ENCODE measurements at regions of chr1 and their contacts with region 1.

Region 1: DNA sequence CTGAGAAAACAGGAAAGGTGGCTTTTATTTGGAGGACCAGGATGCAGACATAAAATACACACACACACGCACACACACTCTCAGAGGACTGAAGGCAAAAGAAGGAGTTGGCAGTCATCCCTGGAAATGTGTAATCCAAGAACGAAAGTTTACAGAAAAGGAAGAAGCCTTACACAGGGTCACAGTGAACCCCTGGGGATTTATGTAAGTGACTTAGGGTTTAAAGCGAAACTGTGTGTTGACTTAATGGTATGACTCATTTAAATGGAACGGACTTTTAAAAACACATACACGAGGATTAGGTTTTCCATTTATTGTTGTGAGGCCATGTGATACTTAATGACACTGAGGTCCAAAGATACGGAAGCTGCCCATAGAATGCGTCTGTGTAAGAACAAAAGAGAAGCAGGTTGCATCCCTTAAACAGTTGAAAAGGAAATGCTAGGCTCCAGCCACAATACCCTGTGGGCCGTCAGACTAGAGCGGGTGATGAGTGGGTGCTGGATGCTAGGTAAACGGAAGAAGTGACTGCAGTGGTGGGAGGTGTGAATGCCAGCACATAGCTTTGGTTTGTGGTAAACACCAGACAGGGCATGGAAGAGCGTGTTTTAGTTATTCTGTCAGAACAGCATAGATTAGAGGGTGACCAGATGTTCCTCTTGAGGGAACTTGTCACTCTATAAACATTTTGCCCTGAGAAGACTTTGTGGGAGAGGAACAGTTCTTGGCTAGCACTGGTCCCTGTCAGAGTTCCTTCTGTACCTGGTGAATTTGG is 21.6 kb upstream of the BCL10 start:
- DNase-seq: peak; percentile 91
- H3K4me3 Mint-ChIP-seq: peak overlapping the region; percentile 42
- H3K27ac Mint-ChIP-seq: peak overlapping the region; percentile 71
- H3K4me1 Mint-ChIP-seq: peaks cover 27% of the 10 kb centered on the region
- H3K27me3 Mint-ChIP-seq: peaks cover 38% of the 10 kb centered on the region

Region 2: GRCh38 chr1:84862810-84863251 is 435.2 kb before region 1 on chr1:
- CTCF ChIA-PET with region 1: no interaction called
- POLR2A ChIA-PET with region 1: no interaction called
- intact Hi-C with region 1: loop called (anchors 5 kb)
- DNase-seq: peak; percentile 65
- H3K4me3 Mint-ChIP-seq: peak overlapping the region; percentile 7
- H3K27ac Mint-ChIP-seq: peak overlapping the region; percentile 43
- H3K4me1 Mint-ChIP-seq: peaks cover 28% of the 10 kb centered on the region
- H3K27me3 Mint-ChIP-seq: no peaks in the 10 kb centered on the region

Region 3: GRCh38 chr1:85321237-85321964 is 23.4 kb after region 1 on chr1:
- CTCF ChIA-PET with region 1: interaction called, 7 read pairs
- POLR2A ChIA-PET with region 1: interaction called, 5 read pairs
- intact Hi-C with region 1: loop called (anchors 1 kb)
- DNase-seq: peak; percentile 72
- H3K4me3 Mint-ChIP-seq: no peak overlapping the region
- H3K27ac Mint-ChIP-seq: no peak overlapping the region
- H3K4me1 Mint-ChIP-seq: peaks cover 9% of the 10 kb centered on the region
- H3K27me3 Mint-ChIP-seq: peaks cover 30% of the 10 kb centered on the region

Region 4: GRCh38 chr1:85566890-85567289 is 268.8 kb after region 1 on chr1:
- CTCF ChIA-PET with region 1: no interaction called
- POLR2A ChIA-PET with region 1: no interaction called
- intact Hi-C with region 1: loop called (anchors 2 kb)
- DNase-seq: peak; percentile 17
- H3K4me3 Mint-ChIP-seq: no peak overlapping the region
- H3K27ac Mint-ChIP-seq: no peak overlapping the region
- H3K4me1 Mint-ChIP-seq: peaks cover 10% of the 10 kb centered on the region
- H3K27me3 Mint-ChIP-seq: peaks cover 18% of the 10 kb centered on the region

Region 5: DNA sequence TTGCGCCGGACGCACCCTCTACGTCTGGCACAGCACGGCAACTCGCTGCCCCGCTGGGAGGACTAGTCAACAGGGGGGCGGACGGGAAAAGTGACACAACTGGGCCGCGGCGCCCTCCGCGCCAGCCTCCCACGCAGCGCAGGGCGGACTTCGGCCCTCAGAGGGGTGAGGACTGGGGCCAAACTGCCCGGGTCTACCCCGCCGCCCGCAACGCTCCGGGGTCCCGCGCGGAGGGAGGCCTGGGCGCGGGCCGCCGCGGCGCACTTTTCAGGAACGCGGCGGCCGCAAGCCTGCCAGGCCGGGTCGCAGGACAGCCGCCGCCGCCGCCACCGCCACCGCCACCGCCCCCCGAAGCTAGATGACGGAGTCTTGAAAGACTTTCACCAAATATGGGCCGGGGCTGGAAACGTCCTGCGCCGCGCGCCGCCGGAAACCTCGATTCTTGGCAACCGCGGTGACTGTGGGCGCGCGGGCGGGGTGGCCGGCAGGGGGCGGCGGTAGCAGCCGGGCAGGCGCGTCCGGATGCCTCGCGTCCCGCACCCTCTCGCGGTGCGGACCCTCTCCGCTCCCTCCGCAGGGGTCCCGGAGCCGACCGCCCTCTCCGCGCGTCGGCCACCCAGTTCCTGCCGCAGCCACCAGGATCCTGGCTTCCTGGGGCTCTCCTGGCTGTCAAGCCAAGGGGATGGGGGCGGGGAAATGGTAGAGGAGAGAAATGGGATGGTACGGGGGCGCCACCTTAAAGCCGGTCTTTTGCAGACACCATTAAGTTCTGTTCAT is 278.8 kb after region 1 on chr1:
- CTCF ChIA-PET with region 1: no interaction called
- POLR2A ChIA-PET with region 1: no interaction called
- intact Hi-C with region 1: loop called (anchors 2 kb)
- DNase-seq: peak; percentile 72
- H3K4me3 Mint-ChIP-seq: peak overlapping the region; percentile 60
- H3K27ac Mint-ChIP-seq: no peak overlapping the region
- H3K4me1 Mint-ChIP-seq: peaks cover 33% of the 10 kb centered on the region
- H3K27me3 Mint-ChIP-seq: peaks cover 66% of the 10 kb centered on the region

Region 6: GRCh38 chr1:85707990-85708828 is 410.2 kb after region 1 on chr1 and contains the start of gene ZNHIT6:
- CTCF ChIA-PET with region 1: no interaction called
- POLR2A ChIA-PET with region 1: no interaction called
- intact Hi-C with region 1: loop called (anchors 2 kb)
- DNase-seq: peak; percentile 93
- H3K4me3 Mint-ChIP-seq: no peak within 1 kb of the TSS
- H3K27ac Mint-ChIP-seq: no peak within 1 kb of the TSS
- H3K4me1 Mint-ChIP-seq: peaks cover 23% of the 10 kb centered on the region
- H3K27me3 Mint-ChIP-seq: no peaks in the 10 kb centered on the region
- total RNA-seq, gene ZNHIT6: 18.7 TPM

Measured in activated CD4-positive, alpha-beta memory T cell treated with anti-CD3 and anti-CD28 coated beads for 36 hours (primary cell).